Motor neuron (in vitro differentiated cells): ENCODE measurements at regions of chr6 and their contacts with region 1.

Region 1: GRCh38 chr6:136526196-136526930 is 23.9 kb downstream of the MAP7 start:
- ATAC-seq: peak; percentile 84 to 96 (median 91)
- H3K4me3 ChIP-seq: peak overlapping the region; percentile 19 to 34 (median 27)
- H3K27ac ChIP-seq: peak overlapping the region; percentile 64 to 73
- H3K4me1 ChIP-seq: peaks cover 27 to 32% of the 10 kb centered on the region in 2 donors

Region 2: GRCh38 chr6:136289579-136290409 is 236.6 kb before region 1 on chr6 and contains the start of gene BCLAF1:
- in situ Hi-C with region 1: loop called in 1 of 9 experiments (anchors 25 kb)
- ATAC-seq: peak; percentile 77 to 93 (median 90)
- H3K4me3 ChIP-seq: peak within 1 kb of the TSS; percentile 85 to 95 (median 87)
- H3K27ac ChIP-seq: peak within 1 kb of the TSS; percentile 99 to 100
- H3K4me1 ChIP-seq: peaks cover 17 to 18% of the 10 kb centered on the region in 2 donors
- total RNA-seq, gene BCLAF1: 76.7 to 275 (median 138) TPM

Region 3: GRCh38 chr6:136317021-136317694 is 209.2 kb before region 1 on chr6:
- in situ Hi-C with region 1: loop called in 1 of 9 experiments (anchors 25 kb)
- ATAC-seq: peak in 7 of 8 experiments; percentile 50 to 96 (median 85)
- H3K4me3 ChIP-seq: no peak overlapping the region
- H3K27ac ChIP-seq: no peak overlapping the region
- H3K4me1 ChIP-seq: no peaks in the 10 kb centered on the region

Region 4: GRCh38 chr6:136446579-136447182 is 79.7 kb before region 1 on chr6:
- in situ Hi-C with region 1: no loop called
- ATAC-seq: no peak
- H3K4me3 ChIP-seq: no peak overlapping the region
- H3K27ac ChIP-seq: no peak overlapping the region
- H3K4me1 ChIP-seq: peaks cover 0 to 3% of the 10 kb centered on the region in 2 donors

Region 5: GRCh38 chr6:136772685-136773472 is 246.5 kb after region 1 on chr6:
- in situ Hi-C with region 1: no loop called
- ATAC-seq: no peak
- H3K4me3 ChIP-seq: no peak overlapping the region
- H3K27ac ChIP-seq: no peak overlapping the region
- H3K4me1 ChIP-seq: peaks cover 5 to 11% of the 10 kb centered on the region in 2 donors